ENCODE measurements at regions of chr5 and their contacts with region 1.

Region 1: GRCh38 chr5:180212363-180213255 is 3.6 kb upstream of the RASGEF1C start:
- DNase-seq: no peak
- ATAC-seq: no peak

Region 2: DNA sequence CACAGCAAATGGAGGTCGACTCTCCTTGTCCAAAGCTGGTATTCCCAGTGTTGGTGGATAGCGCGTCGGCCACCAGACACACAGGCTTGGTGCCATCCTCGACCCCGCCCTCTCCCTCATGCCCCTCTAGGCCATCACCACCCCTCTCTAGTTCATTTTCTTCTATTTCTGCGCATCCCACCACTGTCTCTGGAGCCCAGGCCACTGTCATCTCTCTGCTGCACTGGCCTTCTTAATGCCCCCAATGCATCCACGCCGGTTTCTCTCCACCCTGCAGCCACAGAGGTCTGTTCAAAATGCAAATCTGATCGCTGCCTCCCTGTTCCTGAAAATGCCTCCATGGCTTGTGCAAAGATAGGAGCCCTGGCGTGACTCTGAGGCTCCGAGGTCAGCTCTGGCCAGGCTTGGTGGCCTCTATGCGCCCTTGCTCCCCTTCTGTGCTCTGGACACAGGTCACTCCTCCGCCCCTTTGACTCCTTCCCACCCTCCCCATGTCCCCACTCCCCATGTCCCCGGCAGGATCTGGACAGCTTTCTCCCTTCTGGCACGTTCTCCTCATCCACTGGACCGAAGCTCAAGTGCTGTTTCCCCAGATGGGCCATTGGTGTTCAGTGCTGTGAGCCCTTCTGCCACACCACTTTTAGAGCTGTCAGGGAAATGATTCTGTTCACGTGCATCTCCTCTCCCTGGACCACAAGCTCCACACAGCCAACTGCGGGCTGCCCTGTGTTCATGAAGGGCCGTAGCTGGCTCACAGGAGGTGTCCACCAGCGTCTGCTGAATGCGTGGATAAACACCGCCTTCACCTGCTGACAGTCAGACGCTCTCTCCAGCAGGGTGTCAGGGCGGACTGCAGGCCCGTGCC is 81.5 kb before region 1 on chr5:
- intact Hi-C with region 1: loop called (anchors 5 kb)
- DNase-seq: peak; percentile 47
- ATAC-seq: no peak

Region 3: DNA sequence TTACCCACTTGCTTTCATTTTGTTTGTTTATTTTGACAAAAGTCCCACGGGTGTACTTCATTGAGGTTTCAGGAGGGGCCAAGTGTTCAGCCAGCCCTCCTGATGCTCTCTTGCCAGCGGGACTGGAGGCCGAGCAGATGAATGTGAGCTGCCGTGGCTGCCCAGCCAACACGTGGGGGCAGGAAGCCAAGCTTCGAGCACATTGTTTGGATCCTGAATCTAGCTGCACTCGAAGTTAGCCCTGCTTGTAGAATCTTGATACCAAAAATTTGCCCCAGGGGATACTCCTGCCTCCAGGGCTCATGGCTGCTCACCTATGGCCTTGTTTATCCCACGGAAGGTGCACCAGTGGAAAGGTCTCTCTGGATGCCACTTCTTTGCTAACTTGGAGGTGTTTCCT is 52.8 kb before region 1 on chr5:
- intact Hi-C with region 1: loop called (anchors 2 kb)
- DNase-seq: peak; percentile 47
- ATAC-seq: no peak

Region 4: DNA sequence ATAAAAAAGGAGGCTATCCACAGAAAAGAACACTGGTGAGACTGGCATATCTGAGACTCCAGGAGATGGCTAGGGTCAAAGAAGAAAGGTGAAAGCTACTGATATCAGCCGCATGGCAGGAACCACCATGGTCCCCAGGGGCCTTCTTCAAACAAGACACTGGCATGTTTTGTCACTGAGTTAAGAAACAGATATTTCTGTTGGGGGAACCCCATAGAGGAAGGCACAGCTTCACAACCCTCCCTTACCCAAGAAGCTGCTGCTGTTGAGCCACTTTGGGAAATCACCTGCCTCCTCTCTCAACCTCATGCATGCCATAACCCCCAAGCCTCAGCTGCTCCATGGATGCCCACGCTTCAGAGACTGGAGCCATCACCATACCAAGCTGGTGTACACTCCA is 762.7 kb after region 1 on chr5:
- intact Hi-C with region 1: no loop called
- DNase-seq: no peak
- ATAC-seq: no peak

Measured in sciatic nerve (tissue), 2 donors.